ENCODE measurements at regions of chr10 and their contacts with region 1.

Region 1: DNA sequence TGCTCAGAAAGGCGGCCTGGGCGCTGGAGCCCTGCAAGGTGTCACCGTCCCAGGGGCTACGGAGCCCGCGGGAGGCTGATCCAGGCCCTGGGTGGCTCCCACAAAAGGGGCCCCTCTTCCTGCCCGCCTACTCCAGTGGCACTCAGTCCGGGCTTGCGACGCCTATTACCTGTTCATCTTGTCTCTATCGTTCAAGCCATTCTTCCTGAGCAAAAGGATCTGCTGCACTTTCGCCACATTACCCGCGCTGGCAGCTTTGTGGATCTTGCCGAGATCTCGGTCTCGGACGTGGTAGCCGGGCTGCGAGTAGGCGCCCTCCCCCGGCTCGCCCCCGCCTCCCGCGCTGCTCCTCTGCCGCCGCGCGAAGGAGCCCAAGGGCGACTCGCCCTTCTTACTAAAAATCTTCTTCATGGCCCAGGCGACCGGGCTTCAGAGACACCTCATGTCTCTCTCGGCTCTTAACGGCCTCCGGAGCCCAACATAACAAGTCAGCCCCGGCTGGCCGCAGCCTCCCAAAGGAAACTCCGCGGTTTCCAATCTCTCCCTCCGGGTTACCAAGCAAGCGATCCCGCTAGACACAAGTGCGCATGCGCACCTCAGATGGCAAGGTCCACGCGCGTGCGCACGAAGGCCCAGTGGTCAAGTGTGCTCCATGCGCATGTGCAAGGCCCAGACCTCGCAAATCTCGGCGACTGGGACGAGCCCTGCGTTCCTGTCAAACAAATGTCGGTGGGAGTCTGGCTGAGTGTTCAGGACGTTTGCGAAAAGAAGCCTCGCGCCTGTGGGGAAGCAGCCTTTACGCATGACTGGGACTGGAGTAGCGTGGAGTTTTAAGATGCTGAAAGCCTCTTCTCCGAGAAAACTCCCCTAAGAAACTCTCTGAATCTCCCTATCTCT is at the start of gene ANKRD26:
- DNase-seq: peak; percentile 98 to 99
- H3K4me3 ChIP-seq: peak within 1 kb of the TSS; percentile 71
- H3K4me3 Mint-ChIP-seq: peak within 1 kb of the TSS; percentile 84
- H3K27ac Mint-ChIP-seq: peak within 1 kb of the TSS; percentile 89
- H3K4me1 ChIP-seq: no peaks in the 10 kb centered on the region; the same call in 1 of the 2 replicates
- H3K4me1 Mint-ChIP-seq: peaks cover 7% of the 10 kb centered on the region
- H3K27me3 ChIP-seq: no peaks in the 10 kb centered on the region
- H3K27me3 Mint-ChIP-seq: peaks cover 2% of the 10 kb centered on the region
- CTCF ChIP-seq: no peak
- total RNA-seq, gene ANKRD26: 16.2 and 17.5 TPM in 2 replicates

Region 2: GRCh38 chr10:27088119-27089044 is 11.8 kb before region 1 on chr10:
- CTCF ChIA-PET with region 1: no interaction called
- POLR2A ChIA-PET with region 1: interaction called, 11 read pairs
- intact Hi-C with region 1: no loop called
- DNase-seq: no peak
- H3K4me3 ChIP-seq: no peak overlapping the region
- H3K4me3 Mint-ChIP-seq: no peak overlapping the region
- H3K27ac Mint-ChIP-seq: no peak overlapping the region
- H3K4me1 ChIP-seq: no peaks in the 10 kb centered on the region
- H3K4me1 Mint-ChIP-seq: no peaks in the 10 kb centered on the region
- H3K27me3 ChIP-seq: no peaks in the 10 kb centered on the region
- H3K27me3 Mint-ChIP-seq: no peaks in the 10 kb centered on the region
- CTCF ChIP-seq: no peak

Region 3: GRCh38 chr10:27155066-27155754 is 55.0 kb after region 1 on chr10 and contains the start of gene MASTL:
- CTCF ChIA-PET with region 1: interaction called, 8 read pairs
- POLR2A ChIA-PET with region 1: interaction called, 13 read pairs
- intact Hi-C with region 1: loop called (anchors 2 kb)
- DNase-seq: peak; percentile 95 to 96
- H3K4me3 ChIP-seq: peak within 1 kb of the TSS; percentile 52
- H3K4me3 Mint-ChIP-seq: peak within 1 kb of the TSS; percentile 99
- H3K27ac Mint-ChIP-seq: peak within 1 kb of the TSS; percentile 100
- H3K4me1 ChIP-seq: peaks cover 14% of the 10 kb centered on the region; the same call in 1 of the 2 replicates
- H3K4me1 Mint-ChIP-seq: peaks cover 31% of the 10 kb centered on the region
- H3K27me3 ChIP-seq: no peaks in the 10 kb centered on the region
- H3K27me3 Mint-ChIP-seq: no peaks in the 10 kb centered on the region
- CTCF ChIP-seq: no peak
- total RNA-seq, gene MASTL: 40.2 and 40.5 TPM in 2 replicates

Measured in Caco-2 (cell line).